Left colon (tissue), 2 donors: ENCODE measurements at regions of chr5 and their contacts with region 1.

Region 1: GRCh38 chr5:39714036-39714698 is 289.4 kb upstream of the DAB2 start:
- DNase-seq: peak; percentile 36 to 48
- ATAC-seq: peak; percentile 84

Region 2: DNA sequence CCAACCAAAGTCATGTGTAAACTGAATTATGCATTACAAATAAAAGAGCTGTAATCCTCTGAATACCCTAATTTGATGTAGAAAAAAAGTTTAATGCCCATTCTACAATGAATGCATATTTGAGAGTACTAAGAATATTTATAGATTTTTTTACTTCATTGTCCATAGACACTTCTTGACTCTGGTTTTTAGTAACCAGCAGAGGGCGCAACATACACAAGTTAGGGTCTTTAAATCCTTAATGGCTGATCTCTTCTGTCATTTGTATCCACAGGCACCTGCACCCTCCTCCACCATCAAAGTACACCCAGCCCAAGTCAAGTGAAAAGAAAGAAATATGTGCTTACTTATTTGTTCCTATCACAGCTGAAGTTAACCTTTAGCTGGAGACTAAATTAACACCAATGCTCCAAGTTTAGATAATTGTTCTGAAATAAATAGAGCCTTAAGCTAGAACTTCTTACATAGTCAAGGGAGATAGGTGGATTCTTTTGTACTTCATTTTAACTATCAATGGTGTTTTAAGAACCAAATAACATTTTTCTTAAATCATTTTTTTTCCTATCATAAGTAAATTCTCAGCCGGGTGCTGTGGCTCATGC is 234.8 kb after region 1 on chr5:
- intact Hi-C with region 1: loop called in 1 of 2 experiments (anchors 10 kb)
- DNase-seq: peak; percentile 49 to 64
- ATAC-seq: peak; percentile 89

Region 3: DNA sequence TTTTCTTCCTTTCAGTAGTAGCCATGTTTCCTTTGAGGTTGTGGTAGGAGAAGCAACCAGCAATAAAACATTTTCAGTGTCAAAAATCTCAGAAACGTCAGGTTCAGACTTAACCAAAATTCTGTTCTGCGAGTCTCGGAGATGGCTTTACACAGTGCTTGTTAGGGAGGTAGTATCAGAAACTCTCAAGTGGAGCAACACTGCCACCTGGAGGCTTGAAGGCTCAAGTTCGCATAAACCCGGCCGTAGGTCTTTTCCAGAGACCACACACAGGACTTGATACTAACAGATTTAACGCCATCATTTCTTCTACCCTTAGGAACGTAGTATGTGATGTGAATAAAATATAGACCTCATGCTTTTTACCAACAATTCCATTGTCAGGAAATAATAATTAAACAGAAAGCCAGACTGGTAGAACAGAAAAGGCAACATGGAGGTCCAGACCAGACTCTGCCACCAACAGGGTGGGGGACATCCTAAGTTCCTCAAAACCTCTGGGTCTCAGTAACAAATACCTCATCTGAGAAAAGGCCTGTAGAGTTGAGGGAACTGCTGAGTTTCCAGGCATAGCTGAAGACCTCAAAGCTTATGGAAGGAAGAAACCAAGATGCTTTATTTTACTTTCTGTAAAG is 974.1 kb after region 1 on chr5:
- intact Hi-C with region 1: loop called in 1 of 2 experiments (anchors 10 kb)
- DNase-seq: peak; percentile 73 to 90
- ATAC-seq: peak; percentile 77

Region 4: DNA sequence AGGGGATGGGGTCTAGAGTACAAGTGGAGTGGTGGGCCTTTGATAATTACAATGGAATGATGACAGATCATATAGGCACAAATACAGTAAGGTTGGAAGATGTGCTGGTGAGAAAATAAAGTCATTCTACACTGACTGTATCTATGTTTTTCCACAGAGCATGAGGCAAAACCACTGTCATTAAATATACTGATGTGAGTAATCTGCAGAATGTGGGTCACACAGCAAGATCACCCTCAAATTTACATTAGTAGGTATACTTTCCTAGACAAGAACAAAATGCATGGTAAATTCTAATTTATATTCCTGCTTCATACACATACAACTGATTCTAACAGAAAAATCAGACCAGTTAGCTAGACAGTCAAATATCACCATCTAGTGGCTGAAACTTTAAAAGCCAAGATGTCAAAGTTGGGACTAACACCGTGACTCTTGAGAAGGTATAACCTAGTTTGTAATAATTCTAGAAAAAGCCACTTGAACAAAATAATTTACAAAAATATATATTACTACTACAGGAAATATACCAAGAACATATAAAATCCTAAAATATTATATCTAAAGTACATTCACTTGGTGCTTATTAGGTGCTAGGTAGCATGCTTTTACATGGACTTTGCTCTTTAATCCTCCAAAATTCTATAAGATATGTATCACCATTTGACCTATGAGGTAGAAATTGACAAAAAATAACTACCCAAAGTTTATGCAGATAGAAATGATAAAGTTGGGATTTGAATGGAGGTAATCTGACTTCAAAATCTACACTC is 1022.1 kb after region 1 on chr5:
- intact Hi-C with region 1: loop called in 1 of 2 experiments (anchors 10 kb)
- DNase-seq: no peak
- ATAC-seq: peak; percentile 44